ENCODE measurements at regions of chr2 and their contacts with region 1.

Region 1: GRCh38 chr2:9594366-9595054 is 36.3 kb downstream of the YWHAQ start:
- DNase-seq: peak; percentile 21
- H3K4me3 Mint-ChIP-seq: peak overlapping the region; percentile 1
- H3K27ac Mint-ChIP-seq: peak overlapping the region; percentile 86
- H3K4me1 Mint-ChIP-seq: peaks cover 72% of the 10 kb centered on the region
- H3K27me3 Mint-ChIP-seq: no peaks in the 10 kb centered on the region

Region 2: DNA sequence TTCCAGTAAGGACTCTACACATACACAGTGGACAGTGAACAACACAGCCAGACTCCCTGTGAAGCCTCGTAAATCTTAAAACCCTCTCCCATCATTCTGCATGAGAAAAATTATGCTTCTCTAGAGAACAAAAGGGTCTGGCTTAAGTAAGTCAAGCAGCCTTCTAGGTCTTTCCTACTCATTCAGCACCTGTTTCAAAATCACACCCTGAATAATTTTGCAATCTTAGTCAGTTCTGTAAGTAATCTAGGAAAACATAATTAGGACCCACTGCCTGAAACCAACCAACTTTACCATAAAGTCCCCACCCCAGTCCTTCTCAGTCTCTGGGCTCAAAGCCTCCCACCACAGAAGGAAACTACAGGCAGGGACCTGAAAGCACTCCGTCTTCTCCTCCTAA is 100.4 kb before region 1 on chr2:
- CTCF ChIA-PET with region 1: no interaction called
- intact Hi-C with region 1: loop called (anchors 5 kb)
- DNase-seq: no peak
- H3K4me3 Mint-ChIP-seq: no peak overlapping the region
- H3K27ac Mint-ChIP-seq: peak overlapping the region; percentile 61
- H3K4me1 Mint-ChIP-seq: peaks cover 32% of the 10 kb centered on the region
- H3K27me3 Mint-ChIP-seq: no peaks in the 10 kb centered on the region

Region 3: DNA sequence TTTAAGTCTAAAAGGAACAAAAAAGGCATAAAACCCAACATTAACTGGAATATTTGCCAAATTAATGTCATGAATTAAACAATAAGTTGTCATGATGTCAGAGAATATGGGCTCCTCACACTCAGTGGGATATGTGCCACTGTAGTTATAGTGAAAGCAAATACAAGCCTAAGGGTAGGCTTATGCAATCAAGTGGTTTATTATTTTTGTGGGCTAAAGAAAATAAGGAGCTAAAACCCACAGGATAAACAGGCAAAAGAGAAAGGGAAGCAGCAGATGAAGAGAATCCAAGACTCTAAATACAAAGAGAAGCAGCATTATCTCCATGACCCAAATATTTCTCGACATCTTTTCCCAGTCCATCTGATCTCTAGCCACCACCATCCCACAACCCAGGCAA is 18.8 kb after region 1 on chr2:
- CTCF ChIA-PET with region 1: no interaction called
- intact Hi-C with region 1: loop called (anchors 1 kb)
- DNase-seq: no peak
- H3K4me3 Mint-ChIP-seq: no peak overlapping the region
- H3K27ac Mint-ChIP-seq: no peak overlapping the region
- H3K4me1 Mint-ChIP-seq: peaks cover 78% of the 10 kb centered on the region
- H3K27me3 Mint-ChIP-seq: no peaks in the 10 kb centered on the region

Region 4: GRCh38 chr2:9656270-9656766 is 61.8 kb after region 1 on chr2:
- CTCF ChIA-PET with region 1: no interaction called
- intact Hi-C with region 1: loop called (anchors 1 kb)
- DNase-seq: peak; percentile 75
- H3K4me3 Mint-ChIP-seq: no peak overlapping the region
- H3K27ac Mint-ChIP-seq: peak overlapping the region; percentile 74
- H3K4me1 Mint-ChIP-seq: peaks cover 19% of the 10 kb centered on the region
- H3K27me3 Mint-ChIP-seq: no peaks in the 10 kb centered on the region

Region 5: GRCh38 chr2:9778012-9778411 is 183.5 kb after region 1 on chr2:
- CTCF ChIA-PET with region 1: no interaction called
- intact Hi-C with region 1: loop called (anchors 1 kb)
- DNase-seq: peak; percentile 42
- H3K4me3 Mint-ChIP-seq: no peak overlapping the region
- H3K27ac Mint-ChIP-seq: no peak overlapping the region
- H3K4me1 Mint-ChIP-seq: peaks cover 40% of the 10 kb centered on the region
- H3K27me3 Mint-ChIP-seq: no peaks in the 10 kb centered on the region

Region 6: DNA sequence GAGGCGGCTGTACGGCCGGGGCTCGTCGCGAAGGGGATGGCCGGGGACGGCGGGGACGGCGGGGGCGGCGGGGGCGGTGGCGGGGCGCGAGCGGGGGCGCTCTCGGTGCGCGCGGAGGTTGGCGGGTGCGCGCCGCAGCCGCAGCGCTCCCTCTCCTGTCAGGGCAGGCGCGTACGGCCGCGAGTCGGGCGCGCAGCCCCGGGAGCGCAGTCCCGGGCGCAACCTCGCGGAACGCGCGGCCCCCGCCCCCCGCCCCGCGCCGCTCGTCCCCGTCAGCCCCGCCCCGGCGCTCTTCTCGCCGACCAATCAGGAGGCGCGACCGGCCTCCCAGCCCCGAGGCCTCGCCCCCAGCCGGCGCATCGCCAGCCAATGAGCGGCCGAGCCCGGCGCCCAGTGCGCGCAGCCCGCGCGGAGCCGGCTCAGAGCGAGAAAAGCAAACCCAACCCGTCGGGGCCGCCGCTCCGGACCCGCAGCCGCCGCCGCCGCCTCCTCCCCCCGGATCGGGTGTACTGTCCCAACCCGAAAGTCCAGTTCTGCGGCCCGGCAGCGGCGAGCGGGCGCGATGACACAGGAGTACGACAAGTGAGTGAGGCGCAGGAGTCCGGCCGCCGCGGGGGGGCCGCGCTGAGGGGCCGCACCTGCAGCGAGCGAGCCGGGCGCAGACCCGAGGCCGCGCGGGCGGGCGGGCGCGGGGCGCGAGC is 356.9 kb after region 1 on chr2 and contains the start of gene GRHL1:
- CTCF ChIA-PET with region 1: no interaction called
- intact Hi-C with region 1: no loop called
- DNase-seq: peak; percentile 88
- H3K4me3 Mint-ChIP-seq: peak within 1 kb of the TSS; percentile 75
- H3K27ac Mint-ChIP-seq: no peak within 1 kb of the TSS
- H3K4me1 Mint-ChIP-seq: peaks cover 2% of the 10 kb centered on the region
- H3K27me3 Mint-ChIP-seq: peaks cover 32% of the 10 kb centered on the region
- total RNA-seq, gene GRHL1: 0.69 to 0.79 TPM